ENCODE measurements at regions of chr22 and their contacts with region 1.

Region 1: DNA sequence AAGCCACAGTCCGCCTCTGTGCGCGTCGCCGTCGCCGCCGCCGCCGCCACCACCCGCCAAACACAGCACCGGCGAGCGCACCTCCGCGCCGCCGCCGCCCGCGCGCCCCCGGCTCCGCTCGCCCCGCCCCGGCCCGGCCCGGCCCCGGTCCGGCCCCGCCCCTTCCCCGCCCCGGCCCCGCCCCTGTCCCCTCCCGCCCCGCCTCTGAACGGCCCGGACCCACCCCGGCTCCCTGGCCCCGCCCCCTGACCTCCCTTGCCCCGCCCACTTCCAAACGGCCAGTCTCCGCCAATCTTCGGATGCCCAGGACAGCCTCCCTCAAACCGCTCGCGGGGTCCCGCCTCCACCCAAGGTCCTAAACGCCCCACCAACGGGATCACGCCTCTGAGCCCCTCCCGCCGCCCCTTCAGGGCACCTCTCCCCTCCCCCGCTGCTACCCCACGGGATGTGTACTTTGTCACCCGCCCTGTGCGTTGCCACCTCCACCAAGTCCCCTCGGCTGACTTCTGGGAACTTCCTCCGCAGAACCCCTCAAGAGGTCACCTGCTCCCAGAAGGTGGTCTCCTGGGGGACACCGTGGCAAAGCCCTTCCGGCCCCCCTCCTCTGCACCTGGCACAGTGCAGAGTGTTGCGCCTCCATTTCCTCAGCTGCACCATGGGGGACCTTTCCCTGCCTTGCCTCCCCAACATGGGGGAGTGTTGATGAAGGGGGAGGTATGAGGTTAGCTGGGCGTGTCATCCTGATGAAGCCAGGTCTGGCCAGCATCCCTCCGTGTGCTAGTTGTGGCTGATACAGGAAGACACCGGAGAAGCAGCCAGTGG is at the start of gene KIAA0930:
- DNase-seq: peak; percentile 67 to 68
- H3K4me3 ChIP-seq: peak within 1 kb of the TSS; percentile 11 to 50 (median 25)
- H3K27ac ChIP-seq: no peak within 1 kb of the TSS
- H3K4me1 ChIP-seq: peaks cover 12 to 29% of the 10 kb centered on the region in 2 donors
- H3K27me3 ChIP-seq: no peaks in the 10 kb centered on the region
- CTCF ChIP-seq: no peak
- POLR2A ChIP-seq: no peak
- total RNA-seq, gene KIAA0930: 21.0 to 42.7 (median 25.0) TPM

Region 2: DNA sequence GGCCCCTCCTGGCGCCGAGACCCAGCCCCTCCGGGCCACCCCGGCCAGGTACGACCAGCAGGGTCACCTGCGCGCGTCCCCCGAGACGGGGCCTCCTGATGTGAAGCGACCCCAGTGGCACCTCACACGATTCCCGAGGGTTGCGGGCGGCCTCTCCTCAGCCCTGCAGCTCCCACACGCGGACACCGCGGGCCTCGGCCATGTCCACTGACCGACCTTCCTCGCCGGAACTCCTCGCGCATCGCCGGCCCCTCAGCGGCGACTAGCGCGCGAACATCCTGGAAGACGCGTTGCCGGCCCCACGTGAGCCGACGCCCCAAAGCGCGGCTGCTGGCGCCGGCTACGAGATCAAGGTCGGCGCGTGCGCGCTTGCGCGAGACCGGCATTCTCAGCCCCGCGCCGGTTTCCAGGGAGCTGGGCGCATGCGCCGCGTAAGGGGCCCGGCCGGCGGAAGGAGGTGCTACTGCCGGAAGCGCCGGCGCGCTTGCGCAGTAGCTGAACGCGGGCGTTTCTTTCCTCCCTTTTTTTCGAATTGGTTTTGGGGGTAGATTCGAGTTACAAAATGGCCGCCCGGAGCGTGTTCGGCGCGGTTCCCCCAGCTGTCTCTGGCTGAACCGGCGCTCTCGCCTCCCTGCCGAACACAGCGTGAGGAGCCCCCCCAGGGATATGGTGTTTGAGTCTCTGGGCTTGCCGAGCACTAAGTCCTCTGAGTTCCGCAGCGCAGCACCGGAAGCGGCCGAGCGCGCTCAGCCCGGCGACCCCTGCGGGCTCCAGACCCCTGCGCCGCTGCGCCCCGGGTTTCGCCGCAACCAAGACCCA is 77.4 kb before region 1 on chr22 and contains the start of gene NUP50:
- intact Hi-C with region 1: loop called (anchors 2 kb)
- DNase-seq: peak; percentile 95 to 96
- H3K4me3 ChIP-seq: peak within 1 kb of the TSS; percentile 87 to 97 (median 91)
- H3K27ac ChIP-seq: peak within 1 kb of the TSS; percentile 56 to 92 (median 91)
- H3K4me1 ChIP-seq: peaks cover 21 to 36% of the 10 kb centered on the region in 2 donors
- H3K27me3 ChIP-seq: no peaks in the 10 kb centered on the region
- CTCF ChIP-seq: no peak
- POLR2A ChIP-seq: peak in 1 of 2 donors; percentile 77
- total RNA-seq, gene NUP50: 53.9 to 128 (median 91.9) TPM